Dendritic cell treated with granulocyte-macrophage colony-stimulating factor and Interleukin-4, amounts not matched to agents 40 ng/mL and 50 ng/mL, for 4 days (primary cell): ENCODE measurements at regions of chr2 and their contacts with region 1.

Region 1: DNA sequence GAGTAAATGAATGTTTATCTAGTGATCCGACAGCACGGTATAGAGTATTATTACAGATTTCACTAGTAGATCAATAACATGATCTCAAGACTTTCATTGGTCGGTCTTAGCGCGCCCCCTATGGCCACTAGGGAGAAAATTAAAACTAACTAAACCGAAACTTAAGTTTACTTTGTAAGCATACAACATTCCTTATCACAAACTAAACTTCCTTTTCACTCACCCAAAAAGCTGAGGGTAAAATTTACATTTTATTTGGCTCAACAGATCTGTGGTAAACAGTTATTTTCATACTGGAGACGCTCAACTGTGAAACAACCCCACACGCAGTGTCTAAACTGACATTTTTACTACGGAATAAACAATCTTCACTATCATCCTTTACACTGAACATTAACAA is 215.6 kb upstream of the MAP2 start:
- H3K4me3 Mint-ChIP-seq: peak overlapping the region; percentile 69
- H3K27ac Mint-ChIP-seq: peak overlapping the region; percentile 59
- H3K4me1 Mint-ChIP-seq: peaks cover 5% of the 10 kb centered on the region
- H3K27me3 Mint-ChIP-seq: peaks cover 5% of the 10 kb centered on the region

Region 2: GRCh38 chr2:208373460-208374089 is 834.6 kb before region 1 on chr2:
- intact Hi-C with region 1: loop called (anchors 5 kb)
- H3K4me3 Mint-ChIP-seq: no peak overlapping the region
- H3K27ac Mint-ChIP-seq: no peak overlapping the region
- H3K4me1 Mint-ChIP-seq: no peaks in the 10 kb centered on the region
- H3K27me3 Mint-ChIP-seq: no peaks in the 10 kb centered on the region

Region 3: DNA sequence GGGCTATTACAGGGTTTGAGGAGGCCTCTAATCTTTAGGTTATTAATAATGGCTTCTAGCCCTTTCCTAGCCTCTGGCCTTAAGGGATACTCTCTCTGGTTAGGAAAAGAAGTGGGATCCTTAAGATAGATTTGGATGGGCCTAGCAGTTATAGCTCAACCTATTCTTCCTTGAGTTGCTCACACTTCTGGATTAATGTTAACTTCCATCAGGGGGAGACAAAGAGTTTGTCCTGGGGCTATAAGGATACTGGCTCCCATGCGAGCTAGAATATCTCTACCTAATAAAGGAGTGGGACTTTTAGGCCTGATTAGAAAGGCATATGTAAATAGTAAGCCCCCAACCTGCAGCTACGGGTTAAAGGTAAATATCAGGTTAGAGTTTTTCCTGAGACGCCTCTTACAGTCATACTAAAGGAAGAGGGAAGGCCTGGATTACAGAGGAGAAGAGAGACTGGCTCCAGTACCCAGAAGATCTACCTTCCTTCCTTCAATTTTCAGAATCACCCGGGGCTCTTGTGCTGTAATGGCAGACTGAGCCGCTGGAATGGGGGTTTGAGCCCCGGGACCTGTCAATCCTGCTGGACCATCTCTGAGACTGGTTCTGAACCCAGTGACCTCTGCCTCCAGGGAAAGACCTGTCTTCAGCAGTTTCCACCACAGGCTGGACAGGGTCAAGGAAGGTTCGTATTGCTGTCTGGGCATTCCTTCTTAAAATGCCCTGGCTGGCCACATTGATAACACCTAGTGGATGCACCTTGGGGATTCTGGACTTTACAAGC is 815.7 kb before region 1 on chr2:
- intact Hi-C with region 1: loop called (anchors 10 kb)
- H3K4me3 Mint-ChIP-seq: no peak overlapping the region
- H3K27ac Mint-ChIP-seq: no peak overlapping the region
- H3K4me1 Mint-ChIP-seq: no peaks in the 10 kb centered on the region
- H3K27me3 Mint-ChIP-seq: no peaks in the 10 kb centered on the region

Region 4: DNA sequence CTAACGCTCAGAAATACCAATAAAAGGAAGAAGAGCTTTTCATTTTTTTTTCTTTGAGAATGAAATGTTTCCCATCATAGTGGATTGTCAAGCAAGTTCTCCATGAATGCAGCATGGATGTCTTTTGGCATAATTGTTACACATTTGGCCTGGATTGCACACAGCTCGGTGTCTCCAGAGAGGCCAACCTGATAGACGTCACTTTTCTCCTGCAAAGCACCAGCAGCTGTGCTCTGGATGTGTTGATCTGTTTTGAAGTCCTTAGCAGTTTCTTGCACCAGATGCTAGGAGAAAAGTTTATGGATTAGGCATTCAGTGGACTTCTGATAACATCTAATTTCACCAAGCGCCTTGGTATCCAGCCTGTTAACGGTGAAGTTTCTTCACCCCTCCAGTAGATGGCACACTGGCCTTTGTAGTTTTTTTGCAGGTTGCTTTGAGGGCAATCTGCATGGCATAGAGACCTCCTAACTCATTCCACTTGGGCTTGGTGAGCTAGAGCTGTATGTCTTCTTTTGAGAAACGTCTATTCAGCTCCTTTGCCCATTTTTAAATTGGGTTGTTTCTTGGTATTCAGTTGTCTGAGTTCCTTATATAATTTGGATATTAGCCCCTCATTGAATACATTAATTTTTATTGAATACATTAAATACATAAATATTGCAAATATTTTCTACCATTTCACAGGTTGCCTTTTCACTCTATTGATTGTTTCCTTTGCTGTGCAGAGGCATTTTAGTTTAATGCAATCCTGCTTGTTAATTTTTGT is 741.9 kb before region 1 on chr2:
- intact Hi-C with region 1: loop called (anchors 1 kb)
- H3K4me3 Mint-ChIP-seq: no peak overlapping the region
- H3K27ac Mint-ChIP-seq: no peak overlapping the region
- H3K4me1 Mint-ChIP-seq: peaks cover 5% of the 10 kb centered on the region
- H3K27me3 Mint-ChIP-seq: peaks cover 8% of the 10 kb centered on the region

Region 5: DNA sequence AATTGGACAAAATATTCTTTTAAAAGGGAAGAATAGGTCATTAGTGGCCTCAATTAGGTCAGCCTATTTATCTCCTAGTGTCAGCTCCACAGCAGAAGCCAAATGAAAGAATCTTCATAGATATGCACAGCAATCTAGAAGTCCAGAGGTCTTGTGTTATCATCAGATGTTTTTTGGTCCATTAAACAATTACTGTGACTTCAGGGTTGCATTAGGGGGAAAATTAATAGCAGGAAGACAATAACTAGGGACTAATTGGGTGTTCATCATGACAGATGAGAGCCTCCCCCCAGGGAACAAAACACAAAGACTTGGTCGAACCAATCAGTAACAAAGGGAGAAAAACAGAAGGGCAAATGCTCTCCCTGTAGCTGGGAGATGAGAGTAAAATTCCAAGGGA is 536.9 kb before region 1 on chr2:
- intact Hi-C with region 1: no loop called
- H3K4me3 Mint-ChIP-seq: no peak overlapping the region
- H3K27ac Mint-ChIP-seq: no peak overlapping the region
- H3K4me1 Mint-ChIP-seq: peaks cover 11% of the 10 kb centered on the region
- H3K27me3 Mint-ChIP-seq: no peaks in the 10 kb centered on the region

Region 6: DNA sequence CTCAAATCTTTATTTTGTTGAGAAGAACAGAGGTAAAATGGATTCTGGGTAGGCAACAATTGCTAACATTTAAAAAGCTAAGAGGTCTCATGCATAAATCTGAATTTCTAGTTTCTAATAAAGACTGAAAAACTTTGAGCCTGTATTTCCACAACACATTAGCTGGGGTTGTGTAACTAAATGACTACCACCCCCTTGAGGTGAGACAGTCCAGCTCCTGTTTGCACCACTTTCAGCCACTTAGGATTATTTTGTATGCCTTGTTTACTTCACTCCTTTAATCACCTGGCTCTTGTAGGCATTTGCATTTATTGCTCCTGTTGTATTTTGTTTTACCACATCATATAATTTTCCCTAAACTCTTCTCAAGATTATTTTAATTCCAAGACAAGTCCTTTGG is 425.0 kb before region 1 on chr2:
- intact Hi-C with region 1: loop called (anchors 2 kb)
- H3K4me3 Mint-ChIP-seq: no peak overlapping the region
- H3K27ac Mint-ChIP-seq: no peak overlapping the region
- H3K4me1 Mint-ChIP-seq: no peaks in the 10 kb centered on the region
- H3K27me3 Mint-ChIP-seq: no peaks in the 10 kb centered on the region

Region 7: GRCh38 chr2:208820014-208820688 is 388.1 kb before region 1 on chr2:
- intact Hi-C with region 1: loop called (anchors 2 kb)
- H3K4me3 Mint-ChIP-seq: no peak overlapping the region
- H3K27ac Mint-ChIP-seq: no peak overlapping the region
- H3K4me1 Mint-ChIP-seq: no peaks in the 10 kb centered on the region
- H3K27me3 Mint-ChIP-seq: no peaks in the 10 kb centered on the region

Region 8: GRCh38 chr2:209259767-209260166 is 51.6 kb after region 1 on chr2:
- intact Hi-C with region 1: no loop called
- H3K4me3 Mint-ChIP-seq: no peak overlapping the region
- H3K27ac Mint-ChIP-seq: no peak overlapping the region
- H3K4me1 Mint-ChIP-seq: no peaks in the 10 kb centered on the region
- H3K27me3 Mint-ChIP-seq: no peaks in the 10 kb centered on the region